ENCODE measurements at regions of chr1 and their contacts with region 1.

Region 1: DNA sequence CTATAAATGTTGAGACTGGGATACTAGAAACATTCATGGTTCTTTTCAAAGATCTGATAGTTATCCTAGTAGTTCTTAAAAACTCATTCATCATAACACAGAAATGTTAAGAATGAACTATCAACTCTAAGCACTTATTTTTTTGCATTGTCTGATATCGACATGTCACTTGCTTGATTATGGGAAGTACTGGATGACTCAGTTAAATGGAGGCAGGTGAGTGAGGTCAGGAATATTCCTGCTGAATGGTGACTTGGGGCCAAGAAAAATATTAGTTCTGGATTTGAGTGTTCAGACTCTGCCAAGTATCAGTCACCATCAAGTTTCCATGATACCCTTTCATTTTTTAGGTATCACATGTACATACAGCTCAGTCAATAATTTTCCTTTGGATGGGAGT is 63.6 kb downstream of the NEK7 start:
- DNase-seq: no peak
- ATAC-seq: no peak
- H3K4me3 Mint-ChIP-seq: no peak overlapping the region
- H3K27ac Mint-ChIP-seq: no peak overlapping the region
- H3K4me1 Mint-ChIP-seq: peaks cover 10% of the 10 kb centered on the region
- H3K27me3 Mint-ChIP-seq: no peaks in the 10 kb centered on the region
- CTCF ChIP-seq: no peak

Region 2: DNA sequence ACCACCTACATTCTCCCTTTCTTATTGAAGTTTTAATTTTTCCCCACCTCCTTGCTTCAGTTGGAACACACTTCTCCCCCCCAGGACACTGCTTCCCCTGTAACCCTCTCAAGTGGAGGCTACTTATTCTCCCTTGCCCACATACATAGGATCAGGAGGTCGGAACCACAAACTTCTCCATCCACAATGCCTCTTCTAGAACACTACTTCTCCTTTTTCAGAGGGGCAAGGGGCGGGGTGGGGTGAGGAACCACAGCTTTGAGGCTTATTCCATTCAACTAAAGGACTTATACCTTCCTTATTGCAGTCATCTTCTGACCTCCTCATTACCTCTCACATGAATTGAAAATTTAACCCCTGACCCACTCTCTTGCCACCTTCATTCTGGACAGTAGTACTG is 17.7 kb after region 1 on chr1:
- CTCF ChIA-PET with region 1: no interaction called
- POLR2A ChIA-PET with region 1: no interaction called
- intact Hi-C with region 1: loop called (anchors 2 kb)
- DNase-seq: no peak
- ATAC-seq: peak; percentile 78
- H3K4me3 Mint-ChIP-seq: no peak overlapping the region
- H3K27ac Mint-ChIP-seq: no peak overlapping the region
- H3K4me1 Mint-ChIP-seq: peaks cover 25% of the 10 kb centered on the region
- H3K27me3 Mint-ChIP-seq: no peaks in the 10 kb centered on the region
- CTCF ChIP-seq: no peak

Measured in activated B cell treated with CpG ODN at 0.5 μM for 24 hours (primary cell).